ENCODE measurements at regions of chr9 and their contacts with region 1.

Region 1: DNA sequence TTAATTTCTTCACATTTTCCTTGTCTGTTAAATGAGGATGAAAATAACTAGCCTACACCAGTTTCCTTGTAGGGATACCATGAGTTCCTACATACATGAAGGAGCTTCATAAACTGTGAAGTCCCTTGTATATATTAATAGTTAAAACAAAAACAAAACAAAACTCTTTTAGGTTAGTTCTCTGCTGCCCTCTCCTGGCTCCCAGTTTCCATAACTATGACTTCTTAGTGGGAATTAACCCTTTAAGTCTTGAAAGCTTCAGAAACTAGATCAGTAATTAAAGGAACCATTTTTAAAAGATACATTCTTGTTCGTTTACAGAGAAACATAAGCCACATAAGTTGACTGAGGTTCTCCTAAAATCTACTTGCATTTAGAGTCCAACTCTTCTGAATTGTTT is 500.0 kb upstream of the C9orf72 start:
- DNase-seq: peak in 6 of 7 donors; percentile 16 to 63 (median 26)
- H3K4me3 ChIP-seq: no peak overlapping the region
- H3K27ac ChIP-seq: no peak overlapping the region
- H3K4me1 ChIP-seq: no peaks in the 10 kb centered on the region
- H3K27me3 ChIP-seq: no peaks in the 10 kb centered on the region
- CTCF ChIP-seq: peak; percentile 24 to 56 (median 36)
- POLR2A ChIP-seq: no peak

Region 2: GRCh38 chr9:27726244-27727081 is 346.8 kb before region 1 on chr9:
- intact Hi-C with region 1: loop called in 1 of 2 experiments (anchors 10 kb)
- DNase-seq: peak; percentile 39 to 81 (median 63)
- H3K4me3 ChIP-seq: no peak overlapping the region
- H3K27ac ChIP-seq: no peak overlapping the region
- H3K4me1 ChIP-seq: no peaks in the 10 kb centered on the region
- H3K27me3 ChIP-seq: no peaks in the 10 kb centered on the region
- CTCF ChIP-seq: peak; percentile 58 to 81 (median 78)
- POLR2A ChIP-seq: no peak

Region 3: DNA sequence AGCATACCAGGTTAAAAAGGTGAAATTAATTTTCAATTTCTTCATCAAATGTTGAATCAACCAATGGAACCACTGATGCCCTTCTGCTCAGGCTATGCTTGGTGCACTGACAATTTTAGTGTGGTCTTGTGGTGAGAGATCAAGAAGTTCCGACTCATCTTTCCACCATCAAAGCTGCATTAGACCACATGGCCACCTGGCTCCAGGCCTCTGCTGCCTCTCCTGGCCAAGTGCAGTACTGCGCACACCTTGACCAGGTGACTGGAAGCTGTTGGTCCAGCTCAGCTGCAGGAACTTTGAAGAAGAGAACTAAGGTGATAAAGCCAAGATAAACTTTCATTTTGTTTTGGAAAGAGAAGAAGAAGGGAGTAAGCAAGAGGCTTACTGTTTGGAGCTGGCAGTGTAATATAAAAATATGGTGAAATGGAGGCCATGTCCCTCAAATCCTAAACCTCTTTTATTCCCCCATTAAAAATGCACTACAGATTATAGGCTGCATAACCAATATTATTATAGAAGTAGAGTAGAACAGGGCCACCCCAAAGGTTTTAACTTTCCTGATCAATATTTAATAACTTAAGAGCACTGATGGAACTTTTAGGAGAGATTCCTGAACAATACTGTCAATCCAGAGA is 184.5 kb before region 1 on chr9:
- intact Hi-C with region 1: no loop called
- DNase-seq: peak in 2 of 7 donors; percentile 9 to 23
- H3K4me3 ChIP-seq: no peak overlapping the region
- H3K27ac ChIP-seq: no peak overlapping the region
- H3K4me1 ChIP-seq: no peaks in the 10 kb centered on the region
- H3K27me3 ChIP-seq: no peaks in the 10 kb centered on the region
- CTCF ChIP-seq: peak in 5 of 6 experiments; percentile 20 to 43 (median 31)
- POLR2A ChIP-seq: no peak

Region 4: GRCh38 chr9:27967210-27967609 is 106.1 kb before region 1 on chr9:
- intact Hi-C with region 1: no loop called
- DNase-seq: no peak
- H3K4me3 ChIP-seq: no peak overlapping the region
- H3K27ac ChIP-seq: no peak overlapping the region
- H3K4me1 ChIP-seq: no peaks in the 10 kb centered on the region
- H3K27me3 ChIP-seq: no peaks in the 10 kb centered on the region
- CTCF ChIP-seq: no peak
- POLR2A ChIP-seq: no peak

Measured in adrenal gland (tissue), 19 donors.